ENCODE measurements at regions of chr3 and their contacts with region 1.

Region 1: GRCh38 chr3:48151058-48151806 is 37.0 kb downstream of the CDC25A start:
- DNase-seq: peak; percentile 82
- ATAC-seq: peak; percentile 99
- H3K4me3 Mint-ChIP-seq: no peak overlapping the region
- H3K27ac Mint-ChIP-seq: peak overlapping the region; percentile 3
- H3K4me1 Mint-ChIP-seq: peaks cover 2% of the 10 kb centered on the region
- H3K27me3 Mint-ChIP-seq: peaks cover 3% of the 10 kb centered on the region

Region 2: GRCh38 chr3:47731061-47731460 is 420.2 kb before region 1 on chr3:
- CTCF ChIA-PET with region 1: no interaction called
- DNase-seq: no peak
- ATAC-seq: no peak
- H3K4me3 Mint-ChIP-seq: no peak overlapping the region
- H3K27ac Mint-ChIP-seq: no peak overlapping the region
- H3K4me1 Mint-ChIP-seq: peaks cover 9% of the 10 kb centered on the region
- H3K27me3 Mint-ChIP-seq: no peaks in the 10 kb centered on the region

Region 3: DNA sequence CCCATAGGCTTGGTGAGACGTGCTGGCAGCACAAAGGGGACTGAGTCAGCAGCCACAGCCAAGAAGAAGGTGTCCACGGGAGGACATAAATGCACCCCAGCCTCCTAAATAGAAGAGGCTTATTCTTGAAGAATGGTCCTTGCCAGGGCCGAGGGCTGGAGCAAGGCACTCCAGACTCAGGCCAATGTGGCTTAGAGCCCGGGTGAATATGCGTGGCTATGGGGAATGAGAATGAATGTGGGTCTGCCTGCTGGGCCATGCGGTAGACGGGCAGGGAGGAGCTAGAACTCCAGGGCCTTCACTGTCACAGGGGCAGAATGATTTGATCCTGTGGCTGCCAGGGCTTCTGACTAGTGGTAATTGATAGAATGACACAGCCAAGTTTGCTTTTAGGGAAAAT is 314.2 kb before region 1 on chr3:
- CTCF ChIA-PET with region 1: interaction called, 39 read pairs
- DNase-seq: no peak
- ATAC-seq: no peak
- H3K4me3 Mint-ChIP-seq: no peak overlapping the region
- H3K27ac Mint-ChIP-seq: no peak overlapping the region
- H3K4me1 Mint-ChIP-seq: no peaks in the 10 kb centered on the region
- H3K27me3 Mint-ChIP-seq: no peaks in the 10 kb centered on the region

Region 4: GRCh38 chr3:47863237-47864128 is 287.7 kb before region 1 on chr3:
- CTCF ChIA-PET with region 1: no interaction called
- DNase-seq: no peak
- ATAC-seq: no peak
- H3K4me3 Mint-ChIP-seq: no peak overlapping the region
- H3K27ac Mint-ChIP-seq: no peak overlapping the region
- H3K4me1 Mint-ChIP-seq: no peaks in the 10 kb centered on the region
- H3K27me3 Mint-ChIP-seq: no peaks in the 10 kb centered on the region

Region 5: DNA sequence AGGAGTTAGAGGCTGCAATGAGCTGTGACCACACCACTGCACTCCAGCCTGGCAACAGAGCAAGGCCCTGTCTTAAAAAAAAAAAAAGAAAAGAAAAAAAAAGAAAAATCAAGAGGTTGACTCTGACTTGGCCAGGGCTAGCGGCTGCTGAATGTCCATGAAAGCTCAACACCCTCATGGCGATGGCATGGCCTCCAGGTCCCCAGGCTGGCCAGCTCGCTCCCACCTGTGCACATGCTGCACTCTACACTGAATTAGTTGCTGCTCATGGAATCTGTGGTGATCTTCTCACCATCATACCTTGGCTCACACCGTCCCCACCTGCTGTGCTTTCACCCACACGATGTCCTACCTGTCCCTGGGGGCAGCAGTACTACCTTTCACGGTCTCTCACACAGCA is 48.7 kb after region 1 on chr3:
- CTCF ChIA-PET with region 1: no interaction called
- DNase-seq: no peak
- ATAC-seq: no peak
- H3K4me3 Mint-ChIP-seq: no peak overlapping the region
- H3K27ac Mint-ChIP-seq: no peak overlapping the region
- H3K4me1 Mint-ChIP-seq: peaks cover 3% of the 10 kb centered on the region
- H3K27me3 Mint-ChIP-seq: peaks cover 7% of the 10 kb centered on the region

Measured in activated CD8-positive, alpha-beta memory T cell treated with anti-CD3 and anti-CD28 coated beads, Interleukin-2, amount 10 ng/mL, durations not matched to agents 7 days and 5 days (primary cell).